ENCODE measurements at regions of chr20 and their contacts with region 1.

Region 1: GRCh38 chr20:8043687-8044282 is 24.2 kb upstream of the TMX4 start:
- DNase-seq: peak; percentile 14
- ATAC-seq: peak; percentile 71
- H3K4me3 Mint-ChIP-seq: no peak overlapping the region
- H3K27ac Mint-ChIP-seq: no peak overlapping the region
- H3K4me1 Mint-ChIP-seq: peaks cover 1% of the 10 kb centered on the region
- H3K27me3 Mint-ChIP-seq: peaks cover 4% of the 10 kb centered on the region
- CTCF ChIP-seq: peak; percentile 90

Region 2: GRCh38 chr20:7935027-7935551 is 108.7 kb before region 1 on chr20:
- CTCF ChIA-PET with region 1: interaction called, 10 read pairs
- POLR2A ChIA-PET with region 1: no interaction called
- intact Hi-C with region 1: no loop called
- DNase-seq: no peak
- ATAC-seq: no peak
- H3K4me3 Mint-ChIP-seq: no peak overlapping the region
- H3K27ac Mint-ChIP-seq: no peak overlapping the region
- H3K4me1 Mint-ChIP-seq: no peaks in the 10 kb centered on the region
- H3K27me3 Mint-ChIP-seq: peaks cover 8% of the 10 kb centered on the region
- CTCF ChIP-seq: no peak

Region 3: DNA sequence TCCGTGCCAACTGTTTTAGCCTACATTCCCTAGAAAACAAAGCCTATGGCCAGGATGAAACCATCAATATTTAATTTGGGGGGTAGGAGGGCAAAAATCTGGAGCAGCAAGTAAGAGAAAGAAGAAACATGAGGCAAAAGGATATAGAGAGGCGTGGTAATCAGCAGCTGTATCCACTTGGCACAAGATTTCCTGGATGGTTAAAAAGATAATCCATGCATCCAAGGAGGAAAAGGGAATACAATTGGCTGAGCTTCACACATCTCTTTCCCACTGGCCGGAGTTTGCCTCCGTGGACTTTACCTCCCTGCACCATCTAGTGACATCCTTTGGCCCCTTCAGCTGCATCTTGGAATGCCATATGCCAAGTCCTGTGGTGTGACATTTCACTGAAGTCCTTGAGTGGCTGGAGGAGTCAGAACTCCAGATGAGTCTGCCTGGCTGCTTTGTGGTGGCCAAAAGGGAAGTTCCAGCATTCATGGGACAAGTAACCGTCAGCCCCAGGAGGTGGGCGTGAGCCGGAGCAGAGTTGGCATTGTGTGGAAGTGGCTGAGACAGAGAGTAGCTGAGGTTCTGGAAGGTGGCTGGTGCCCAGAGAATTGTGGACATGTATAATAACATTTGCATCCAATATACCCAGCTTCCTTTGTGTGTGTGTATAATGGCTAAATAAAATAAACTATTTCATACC is 10.5 kb before region 1 on chr20:
- CTCF ChIA-PET with region 1: interaction called, 24 read pairs
- POLR2A ChIA-PET with region 1: no interaction called
- intact Hi-C with region 1: no loop called
- DNase-seq: no peak
- ATAC-seq: no peak
- H3K4me3 Mint-ChIP-seq: no peak overlapping the region
- H3K27ac Mint-ChIP-seq: no peak overlapping the region
- H3K4me1 Mint-ChIP-seq: no peaks in the 10 kb centered on the region
- H3K27me3 Mint-ChIP-seq: no peaks in the 10 kb centered on the region
- CTCF ChIP-seq: no peak

Region 4: GRCh38 chr20:8131598-8132483 is 88.1 kb after region 1 on chr20 and contains the start of gene PLCB1:
- CTCF ChIA-PET with region 1: interaction called, 6 read pairs
- POLR2A ChIA-PET with region 1: no interaction called
- intact Hi-C with region 1: loop called (anchors 5 kb)
- DNase-seq: peak; percentile 86
- ATAC-seq: peak; percentile 93
- H3K4me3 Mint-ChIP-seq: peak within 1 kb of the TSS; percentile 76
- H3K27ac Mint-ChIP-seq: peak within 1 kb of the TSS; percentile 27
- H3K4me1 Mint-ChIP-seq: peaks cover 26% of the 10 kb centered on the region
- H3K27me3 Mint-ChIP-seq: peaks cover 33% of the 10 kb centered on the region
- CTCF ChIP-seq: peak; percentile 73
- total RNA-seq, gene PLCB1: 3.1 to 3.6 TPM

Region 5: GRCh38 chr20:8389381-8390036 is 345.7 kb after region 1 on chr20:
- CTCF ChIA-PET with region 1: interaction called, 20 read pairs
- POLR2A ChIA-PET with region 1: no interaction called
- intact Hi-C with region 1: loop called (anchors 10 kb)
- DNase-seq: no peak
- ATAC-seq: no peak
- H3K4me3 Mint-ChIP-seq: no peak overlapping the region
- H3K27ac Mint-ChIP-seq: no peak overlapping the region
- H3K4me1 Mint-ChIP-seq: peaks cover 7% of the 10 kb centered on the region
- H3K27me3 Mint-ChIP-seq: no peaks in the 10 kb centered on the region
- CTCF ChIP-seq: peak; percentile 81

Measured in activated CD8-positive, alpha-beta T cell treated with anti-CD3 and anti-CD28 coated beads for 36 hours (primary cell).